BJ (cell line): ENCODE measurements at regions of chr5 and their contacts with region 1.

Region 1: GRCh38 chr5:95858661-95859326 is 36.3 kb upstream of the GLRX start:
- DNase-seq: peak; percentile 98
- H3K4me3 ChIP-seq: peak overlapping the region; percentile 10; the same call in 1 of the 2 replicates
- H3K27me3 ChIP-seq: no peaks in the 10 kb centered on the region
- CTCF ChIP-seq: peak; percentile 92

Region 2: GRCh38 chr5:95087816-95088317 is 770.9 kb before region 1 on chr5:
- CTCF ChIA-PET with region 1: no interaction called
- POLR2A ChIA-PET with region 1: no interaction called
- DNase-seq: peak; percentile 9
- H3K4me3 ChIP-seq: no peak overlapping the region
- H3K27me3 ChIP-seq: no peaks in the 10 kb centered on the region
- CTCF ChIP-seq: no peak

Region 3: GRCh38 chr5:95846554-95847260 is 12.1 kb before region 1 on chr5:
- CTCF ChIA-PET with region 1: interaction called, 13 read pairs
- POLR2A ChIA-PET with region 1: no interaction called
- DNase-seq: no peak
- H3K4me3 ChIP-seq: no peak overlapping the region
- H3K27me3 ChIP-seq: no peaks in the 10 kb centered on the region
- CTCF ChIP-seq: peak; percentile 88

Region 4: DNA sequence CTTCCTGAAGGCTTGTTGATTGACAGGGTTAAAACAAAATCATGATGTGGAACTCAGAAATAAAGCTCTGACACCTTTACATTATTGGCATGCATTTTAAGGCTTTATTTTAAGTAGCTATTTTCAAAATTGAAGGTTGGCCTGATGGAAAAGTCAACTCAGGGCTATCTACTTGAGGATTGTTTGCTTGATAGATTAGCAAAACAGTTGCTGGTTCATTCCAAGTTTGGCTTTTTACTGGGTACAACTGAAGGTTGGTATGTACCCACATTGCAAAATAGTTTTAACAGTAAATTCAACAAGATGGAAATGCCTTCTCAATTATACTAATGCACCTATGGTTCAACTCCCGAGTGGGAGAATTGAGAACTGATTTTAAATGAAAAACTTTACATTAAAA is 264.6 kb after region 1 on chr5:
- CTCF ChIA-PET with region 1: no interaction called
- POLR2A ChIA-PET with region 1: interaction called, 39 read pairs
- DNase-seq: no peak
- H3K4me3 ChIP-seq: no peak overlapping the region
- H3K27me3 ChIP-seq: no peaks in the 10 kb centered on the region
- CTCF ChIP-seq: no peak